Activated T-helper 2 cell treated with anti-CD3 and anti-CD28 coated beads, Interferon-gamma antibody, Interleukin-2, Interleukin-4, amounts not matched to agents 10 μg/mL and 5 μg/mL and 100 μg/mL, durations not matched to agents 14 hours and 24 hours and 36 hours (primary cell): ENCODE measurements at regions of chr7 and their contacts with region 1.

Region 1: GRCh38 chr7:138875794-138876193 is 77.8 kb upstream of the ATP6V0A4 start:
- DNase-seq: peak; percentile 75
- H3K4me3 Mint-ChIP-seq: no peak overlapping the region
- H3K27ac Mint-ChIP-seq: peak overlapping the region; percentile 52
- H3K4me1 Mint-ChIP-seq: peaks cover 28% of the 10 kb centered on the region
- H3K27me3 Mint-ChIP-seq: peaks cover 2% of the 10 kb centered on the region

Region 2: GRCh38 chr7:138002096-138002827 is 873.5 kb before region 1 on chr7:
- intact Hi-C with region 1: loop called (anchors 5 kb)
- DNase-seq: peak; percentile 98
- H3K4me3 Mint-ChIP-seq: peak overlapping the region; percentile 96
- H3K27ac Mint-ChIP-seq: peak overlapping the region; percentile 93
- H3K4me1 Mint-ChIP-seq: peaks cover 36% of the 10 kb centered on the region
- H3K27me3 Mint-ChIP-seq: no peaks in the 10 kb centered on the region

Region 3: DNA sequence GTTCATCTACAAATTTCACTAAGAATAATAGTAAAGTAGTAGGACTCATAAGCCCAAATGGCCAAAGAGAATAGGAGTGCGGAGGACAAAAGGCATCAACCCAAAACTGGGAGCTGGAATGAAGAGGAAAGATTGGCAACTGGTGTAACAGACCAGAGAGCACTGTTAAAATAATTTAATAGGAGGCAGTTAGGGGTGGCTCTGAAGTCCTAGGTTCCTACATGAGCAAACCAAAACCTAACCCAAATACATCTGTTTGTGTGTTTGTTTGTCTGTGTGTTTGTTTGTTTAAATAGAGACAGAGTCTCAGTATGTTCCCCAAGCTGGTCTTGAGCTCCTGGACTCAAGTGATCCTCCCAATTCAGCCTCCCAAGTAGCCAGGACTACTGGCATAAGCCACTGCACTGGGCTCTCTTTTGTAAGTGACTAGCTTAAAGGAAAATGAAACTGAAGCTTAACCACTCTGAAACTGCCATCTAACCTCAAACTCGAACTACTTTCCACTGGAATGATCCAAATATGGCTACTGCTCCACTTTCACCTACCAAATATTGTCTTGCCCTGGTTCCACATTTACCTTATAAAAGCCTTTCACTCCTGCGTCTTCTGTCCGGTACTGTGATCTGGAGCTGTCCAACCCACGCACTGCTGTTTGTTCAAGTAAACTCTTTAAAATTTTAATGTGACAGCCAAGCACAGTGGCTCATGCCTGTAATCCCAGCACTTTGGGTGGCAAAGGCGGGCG is 704.7 kb before region 1 on chr7:
- intact Hi-C with region 1: loop called (anchors 5 kb)
- DNase-seq: no peak
- H3K4me3 Mint-ChIP-seq: no peak overlapping the region
- H3K27ac Mint-ChIP-seq: peak overlapping the region; percentile 14
- H3K4me1 Mint-ChIP-seq: peaks cover 27% of the 10 kb centered on the region
- H3K27me3 Mint-ChIP-seq: peaks cover 38% of the 10 kb centered on the region

Region 4: DNA sequence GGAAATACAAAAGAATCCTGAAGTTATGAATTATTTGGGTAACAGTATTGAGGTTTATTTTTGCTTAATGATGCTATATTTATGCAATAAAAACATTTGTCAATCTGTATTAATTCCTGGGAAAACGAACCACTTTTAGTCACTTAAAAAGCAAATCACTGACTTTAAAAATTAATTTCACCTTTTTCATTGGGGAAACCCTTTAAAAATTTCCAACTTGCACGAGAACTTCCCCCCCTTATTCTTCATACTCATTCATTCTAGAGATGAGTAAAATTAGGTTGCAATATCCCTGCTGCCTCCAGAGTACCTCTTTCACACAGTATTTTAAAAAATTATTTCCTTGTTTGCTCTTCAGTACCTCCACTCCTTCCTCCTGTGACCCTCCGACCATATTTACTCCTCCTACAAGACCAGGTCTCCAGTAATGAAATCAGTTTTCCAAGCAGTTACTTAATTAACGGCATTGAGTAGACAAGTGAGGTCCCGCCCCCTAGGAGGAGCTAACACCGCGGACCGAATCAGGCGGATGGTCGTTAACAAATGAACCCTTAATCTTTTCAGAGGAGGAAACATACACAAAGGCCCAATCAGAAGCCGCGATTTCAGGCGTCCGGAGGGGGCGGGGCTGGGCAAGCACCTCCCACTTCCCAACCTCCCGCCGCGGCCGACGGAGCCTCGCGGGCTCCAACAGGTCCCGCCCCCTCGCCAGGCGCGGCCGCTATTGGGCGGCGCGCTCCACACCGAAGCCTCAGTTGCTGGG is 416.2 kb before region 1 on chr7:
- intact Hi-C with region 1: loop called (anchors 2 kb)
- DNase-seq: peak; percentile 97
- H3K4me3 Mint-ChIP-seq: peak overlapping the region; percentile 74
- H3K27ac Mint-ChIP-seq: peak overlapping the region; percentile 21
- H3K4me1 Mint-ChIP-seq: peaks cover 24% of the 10 kb centered on the region
- H3K27me3 Mint-ChIP-seq: peaks cover 3% of the 10 kb centered on the region

Region 5: DNA sequence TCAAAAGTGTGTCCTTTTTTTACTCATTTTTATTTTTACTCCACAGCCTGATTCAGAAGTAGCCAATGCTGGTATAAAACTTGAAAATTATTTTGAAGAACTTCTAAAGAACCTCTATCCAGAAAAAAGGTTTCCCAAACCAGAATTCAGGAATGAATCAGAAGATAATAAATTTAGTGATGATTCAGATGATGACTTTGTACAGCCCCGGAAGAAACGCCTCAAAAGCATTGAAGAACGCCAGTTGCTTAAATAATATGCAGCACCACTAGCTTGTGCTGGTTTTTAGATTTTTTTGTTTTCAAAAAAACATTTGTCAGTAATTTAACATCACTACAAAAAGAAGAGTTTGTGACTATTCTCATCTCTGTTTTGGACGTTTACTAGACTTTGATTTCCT is 291.1 kb before region 1 on chr7:
- intact Hi-C with region 1: no loop called
- DNase-seq: no peak
- H3K4me3 Mint-ChIP-seq: no peak overlapping the region
- H3K27ac Mint-ChIP-seq: no peak overlapping the region
- H3K4me1 Mint-ChIP-seq: no peaks in the 10 kb centered on the region
- H3K27me3 Mint-ChIP-seq: no peaks in the 10 kb centered on the region

Region 6: DNA sequence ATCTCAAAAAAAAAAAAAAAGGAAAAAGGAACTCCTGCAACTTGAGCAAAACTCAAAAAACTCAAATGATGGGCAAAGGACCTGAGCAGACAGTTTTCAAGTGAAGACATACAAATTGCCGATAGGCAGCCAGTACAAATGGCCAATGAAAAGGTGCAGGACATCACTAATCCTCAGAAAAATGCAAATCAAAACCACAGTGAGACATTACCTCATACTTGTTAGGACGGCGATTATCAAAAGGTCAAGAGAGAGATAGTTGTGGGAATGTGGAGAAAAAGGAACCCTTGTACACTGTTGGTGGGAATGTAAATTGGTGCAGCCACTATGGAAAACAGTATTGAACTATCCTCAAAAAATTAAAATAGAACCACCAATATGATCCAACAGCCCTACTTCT is 191.4 kb before region 1 on chr7:
- intact Hi-C with region 1: no loop called
- DNase-seq: no peak
- H3K4me3 Mint-ChIP-seq: no peak overlapping the region
- H3K27ac Mint-ChIP-seq: no peak overlapping the region
- H3K4me1 Mint-ChIP-seq: peaks cover 3% of the 10 kb centered on the region
- H3K27me3 Mint-ChIP-seq: peaks cover 2% of the 10 kb centered on the region

Region 7: GRCh38 chr7:138752568-138753518 is 123.0 kb before region 1 on chr7:
- intact Hi-C with region 1: loop called (anchors 1 kb)
- DNase-seq: peak; percentile 86
- H3K4me3 Mint-ChIP-seq: no peak overlapping the region
- H3K27ac Mint-ChIP-seq: peak overlapping the region; percentile 50
- H3K4me1 Mint-ChIP-seq: peaks cover 35% of the 10 kb centered on the region
- H3K27me3 Mint-ChIP-seq: peaks cover 11% of the 10 kb centered on the region

Region 8: DNA sequence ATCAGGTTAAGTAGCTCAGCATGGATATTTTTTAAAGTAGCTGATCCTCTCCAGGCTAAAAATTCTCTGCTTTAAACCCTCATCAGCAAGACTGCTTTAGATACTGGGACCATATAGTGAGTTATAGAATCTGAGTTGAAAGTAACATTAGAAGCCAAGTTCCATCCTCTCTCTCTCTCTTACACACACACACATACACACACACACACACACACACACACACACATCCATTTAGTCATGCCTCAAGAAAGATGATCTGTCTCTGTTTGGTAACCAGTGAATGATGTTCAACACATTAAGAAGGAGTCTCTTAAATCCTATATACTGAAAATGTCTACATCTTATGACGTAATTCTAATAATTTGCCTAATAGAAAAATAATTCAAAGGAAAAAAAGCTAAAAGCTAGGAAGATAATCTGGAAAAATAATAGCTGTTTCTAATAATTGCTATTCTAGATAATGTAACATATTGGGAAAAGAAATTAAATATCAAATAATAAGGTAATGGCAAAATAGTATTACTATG is 60.9 kb before region 1 on chr7:
- intact Hi-C with region 1: loop called (anchors 2 kb)
- DNase-seq: no peak
- H3K4me3 Mint-ChIP-seq: no peak overlapping the region
- H3K27ac Mint-ChIP-seq: peak overlapping the region; percentile 1
- H3K4me1 Mint-ChIP-seq: peaks cover 28% of the 10 kb centered on the region
- H3K27me3 Mint-ChIP-seq: peaks cover 2% of the 10 kb centered on the region

Region 9: DNA sequence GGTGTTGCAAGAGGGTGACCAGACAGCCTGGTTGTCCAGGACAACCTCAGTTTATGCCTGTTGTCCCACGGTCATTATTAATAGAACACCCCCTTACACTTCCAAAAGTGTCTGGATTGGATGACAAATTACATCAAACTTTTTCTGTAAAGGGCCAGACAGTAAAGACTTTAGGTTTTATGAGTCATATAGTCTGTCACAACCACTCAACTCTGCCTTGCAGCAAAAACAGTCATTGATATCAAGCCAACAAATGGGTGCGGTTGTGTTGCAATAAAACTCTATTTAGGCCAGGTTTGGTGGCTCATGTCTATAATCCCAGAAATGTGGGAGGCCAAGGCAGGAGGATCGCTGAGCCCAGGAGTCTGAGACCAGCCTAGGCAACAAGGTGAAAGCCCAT is 11.1 kb before region 1 on chr7:
- intact Hi-C with region 1: no loop called
- DNase-seq: no peak
- H3K4me3 Mint-ChIP-seq: no peak overlapping the region
- H3K27ac Mint-ChIP-seq: no peak overlapping the region
- H3K4me1 Mint-ChIP-seq: peaks cover 8% of the 10 kb centered on the region
- H3K27me3 Mint-ChIP-seq: peaks cover 2% of the 10 kb centered on the region

Region 10: GRCh38 chr7:139340037-139340807 is 464.4 kb after region 1 on chr7:
- intact Hi-C with region 1: loop called (anchors 2 kb)
- DNase-seq: peak; percentile 97
- H3K4me3 Mint-ChIP-seq: peak overlapping the region; percentile 97
- H3K27ac Mint-ChIP-seq: peak overlapping the region; percentile 100
- H3K4me1 Mint-ChIP-seq: peaks cover 21% of the 10 kb centered on the region
- H3K27me3 Mint-ChIP-seq: peaks cover 3% of the 10 kb centered on the region